Activated CD4-positive, alpha-beta memory T cell treated with anti-CD3 and anti-CD28 coated beads for 36 hours (primary cell): ENCODE measurements at regions of chr11 and their contacts with region 1.

Region 1: GRCh38 chr11:67373925-67374618 is 674 bp upstream of the CLCF1 start:
- DNase-seq: peak; percentile 68
- H3K4me3 Mint-ChIP-seq: peak overlapping the region; percentile 79
- H3K27ac Mint-ChIP-seq: peak overlapping the region; percentile 38
- H3K4me1 Mint-ChIP-seq: peaks cover 38% of the 10 kb centered on the region
- H3K27me3 Mint-ChIP-seq: peaks cover 10% of the 10 kb centered on the region

Region 2: DNA sequence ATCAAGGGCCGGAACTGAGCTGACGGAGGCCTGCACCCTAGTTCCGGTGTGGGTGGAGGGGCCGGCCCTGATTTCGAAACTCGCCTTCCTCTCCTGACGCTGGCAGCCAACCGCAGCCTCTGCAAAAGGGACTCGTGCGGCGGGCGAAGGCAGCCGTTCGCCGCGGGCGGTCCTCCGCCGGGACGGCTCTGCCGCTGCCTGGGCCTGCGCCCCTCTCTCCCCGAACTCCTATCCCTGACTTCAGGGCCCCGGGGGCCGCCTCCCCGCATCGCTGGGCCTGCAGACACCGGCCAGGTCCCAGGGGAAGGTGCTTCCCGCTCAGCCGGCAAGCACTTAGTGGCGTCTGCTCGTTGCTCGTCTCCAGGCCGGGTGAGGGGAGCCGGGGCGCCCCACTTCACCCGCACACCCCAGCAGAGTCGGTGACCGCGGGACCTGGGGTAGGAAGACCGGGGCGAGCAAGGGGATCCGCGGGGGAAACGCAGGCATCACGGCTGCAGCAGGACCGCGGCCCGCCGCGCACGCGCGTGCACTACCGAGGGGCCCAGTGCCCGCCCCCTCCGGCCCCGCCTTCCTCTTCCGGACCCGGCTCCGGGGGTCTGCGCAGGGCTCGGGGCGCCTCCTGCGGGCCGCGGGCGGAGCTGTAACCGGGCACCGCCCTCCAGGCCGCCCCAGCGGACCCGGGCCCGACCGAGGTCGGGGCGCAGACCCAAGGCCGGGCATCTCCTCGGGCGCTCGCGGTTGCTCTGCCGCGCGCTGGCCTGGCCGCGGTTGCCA is 85.4 kb before region 1 on chr11:
- CTCF ChIA-PET with region 1: no interaction called
- POLR2A ChIA-PET with region 1: no interaction called
- intact Hi-C with region 1: no loop called
- DNase-seq: peak; percentile 95
- H3K4me3 Mint-ChIP-seq: peak overlapping the region; percentile 66
- H3K27ac Mint-ChIP-seq: peak overlapping the region; percentile 97
- H3K4me1 Mint-ChIP-seq: peaks cover 62% of the 10 kb centered on the region
- H3K27me3 Mint-ChIP-seq: no peaks in the 10 kb centered on the region

Region 3: GRCh38 chr11:67345920-67346799 is 27.9 kb before region 1 on chr11:
- CTCF ChIA-PET with region 1: interaction called, 995 read pairs
- POLR2A ChIA-PET with region 1: interaction called, 3 read pairs
- intact Hi-C with region 1: no loop called
- DNase-seq: peak; percentile 49
- H3K4me3 Mint-ChIP-seq: no peak overlapping the region
- H3K27ac Mint-ChIP-seq: peak overlapping the region; percentile 83
- H3K4me1 Mint-ChIP-seq: peaks cover 47% of the 10 kb centered on the region
- H3K27me3 Mint-ChIP-seq: no peaks in the 10 kb centered on the region

Region 4: GRCh38 chr11:67391304-67392132 is 17.4 kb after region 1 on chr11 and contains the start of gene RAD9A:
- CTCF ChIA-PET with region 1: interaction called, 106 read pairs
- POLR2A ChIA-PET with region 1: interaction called, 4 read pairs
- intact Hi-C with region 1: no loop called
- DNase-seq: peak; percentile 95
- H3K4me3 Mint-ChIP-seq: peak within 1 kb of the TSS; percentile 92
- H3K27ac Mint-ChIP-seq: peak within 1 kb of the TSS; percentile 76
- H3K4me1 Mint-ChIP-seq: peaks cover 33% of the 10 kb centered on the region
- H3K27me3 Mint-ChIP-seq: no peaks in the 10 kb centered on the region
- total RNA-seq, gene RAD9A: 31.0 to 39.1 TPM

Region 5: DNA sequence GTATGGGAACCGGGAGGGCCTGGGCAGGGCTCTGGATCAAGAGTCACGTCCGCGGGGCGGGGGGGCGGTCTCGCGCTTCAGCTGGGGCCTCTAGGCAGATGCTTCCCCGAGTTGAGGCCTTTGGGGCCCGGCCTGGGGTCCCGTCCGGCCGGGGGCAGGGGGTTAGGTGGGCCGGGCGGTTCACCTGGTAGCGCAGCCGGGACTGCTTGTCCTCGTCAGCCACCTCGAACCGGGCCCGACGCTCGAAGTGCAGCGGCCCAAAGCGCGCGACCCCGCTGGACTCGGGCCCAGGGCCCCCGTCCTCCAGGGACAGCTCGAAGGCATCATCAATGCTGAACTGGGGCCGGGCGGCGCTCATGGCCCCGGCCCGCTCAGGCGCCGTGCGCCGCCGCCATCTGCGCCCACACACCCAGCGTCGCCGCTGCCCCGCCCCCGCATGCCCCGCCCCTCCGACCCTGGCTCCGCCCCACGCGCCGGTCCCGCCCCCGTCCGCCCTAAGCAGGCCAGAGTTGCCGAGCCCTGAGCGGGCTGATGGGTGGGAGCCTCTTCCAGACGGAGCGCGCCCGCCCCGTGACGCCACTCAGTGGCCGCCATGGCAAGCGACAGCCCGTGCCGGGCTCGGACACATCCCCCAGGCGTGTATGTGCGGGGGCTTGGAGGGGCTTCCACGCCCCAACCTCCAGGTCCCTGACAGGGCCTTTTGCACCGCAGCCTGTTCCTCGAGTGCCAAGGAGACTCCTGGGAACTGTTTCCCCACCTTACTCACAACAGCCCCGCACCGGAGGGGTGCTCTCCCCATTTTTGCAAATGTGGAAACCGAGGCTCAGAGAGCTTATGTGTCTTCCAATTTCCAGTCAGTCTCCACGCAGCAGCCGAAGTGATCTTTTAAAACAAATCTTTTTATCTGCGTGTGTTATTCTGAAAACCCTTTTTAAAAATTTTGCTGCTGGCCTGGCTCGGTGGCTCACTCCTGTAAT is 95.1 kb after region 1 on chr11 and contains the start of gene TMEM134:
- CTCF ChIA-PET with region 1: no interaction called
- POLR2A ChIA-PET with region 1: no interaction called
- intact Hi-C with region 1: no loop called
- DNase-seq: peak; percentile 95
- H3K4me3 Mint-ChIP-seq: peak within 1 kb of the TSS; percentile 90
- H3K27ac Mint-ChIP-seq: peak within 1 kb of the TSS; percentile 90
- H3K4me1 Mint-ChIP-seq: peaks cover 30% of the 10 kb centered on the region
- H3K27me3 Mint-ChIP-seq: no peaks in the 10 kb centered on the region
- total RNA-seq, gene TMEM134: 68.2 to 75.2 TPM

Region 6: DNA sequence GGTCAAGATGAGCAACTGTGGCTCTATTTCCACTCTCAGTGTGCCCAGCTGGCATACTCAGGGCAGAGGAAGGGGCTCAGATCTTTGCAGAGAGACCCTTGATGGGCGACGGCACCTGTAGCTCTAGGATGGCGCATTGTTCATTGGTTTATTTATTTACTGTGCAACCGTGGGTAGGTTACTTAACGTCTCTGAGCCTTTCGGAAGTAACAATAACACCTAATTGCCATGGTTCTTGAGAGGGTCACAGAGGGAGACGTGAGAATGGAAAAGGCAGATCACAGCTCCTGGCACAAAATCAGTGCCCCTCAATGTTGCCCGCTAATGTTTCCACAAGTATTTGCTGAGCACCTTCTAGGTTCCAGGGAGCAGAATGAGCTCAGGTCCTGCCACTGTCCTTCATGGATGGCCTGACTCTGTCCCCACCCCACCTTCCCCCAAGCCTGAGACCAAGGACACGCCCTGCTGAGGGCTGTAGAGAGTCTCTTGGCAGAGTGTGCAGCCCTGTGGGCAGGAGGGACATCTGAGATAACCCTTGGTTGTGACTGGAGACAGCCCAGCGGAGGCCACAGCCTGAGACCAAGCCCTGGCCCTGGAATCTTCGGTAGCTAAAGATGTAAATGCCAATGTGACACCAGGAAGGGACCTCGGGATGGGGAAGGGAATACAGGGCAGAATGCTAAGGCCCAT is 301.1 kb after region 1 on chr11:
- CTCF ChIA-PET with region 1: no interaction called
- POLR2A ChIA-PET with region 1: no interaction called
- intact Hi-C with region 1: no loop called
- DNase-seq: no peak
- H3K4me3 Mint-ChIP-seq: no peak overlapping the region
- H3K27ac Mint-ChIP-seq: no peak overlapping the region
- H3K4me1 Mint-ChIP-seq: no peaks in the 10 kb centered on the region
- H3K27me3 Mint-ChIP-seq: peaks cover 11% of the 10 kb centered on the region